ENCODE measurements at regions of chr6 and their contacts with region 1.

Region 1: GRCh38 chr6:32868257-32868788 is 14.3 kb downstream of the PSMB9 start:
- DNase-seq: no peak
- H3K4me3 ChIP-seq: no peak overlapping the region
- CTCF ChIP-seq: peak; percentile 70

Region 2: DNA sequence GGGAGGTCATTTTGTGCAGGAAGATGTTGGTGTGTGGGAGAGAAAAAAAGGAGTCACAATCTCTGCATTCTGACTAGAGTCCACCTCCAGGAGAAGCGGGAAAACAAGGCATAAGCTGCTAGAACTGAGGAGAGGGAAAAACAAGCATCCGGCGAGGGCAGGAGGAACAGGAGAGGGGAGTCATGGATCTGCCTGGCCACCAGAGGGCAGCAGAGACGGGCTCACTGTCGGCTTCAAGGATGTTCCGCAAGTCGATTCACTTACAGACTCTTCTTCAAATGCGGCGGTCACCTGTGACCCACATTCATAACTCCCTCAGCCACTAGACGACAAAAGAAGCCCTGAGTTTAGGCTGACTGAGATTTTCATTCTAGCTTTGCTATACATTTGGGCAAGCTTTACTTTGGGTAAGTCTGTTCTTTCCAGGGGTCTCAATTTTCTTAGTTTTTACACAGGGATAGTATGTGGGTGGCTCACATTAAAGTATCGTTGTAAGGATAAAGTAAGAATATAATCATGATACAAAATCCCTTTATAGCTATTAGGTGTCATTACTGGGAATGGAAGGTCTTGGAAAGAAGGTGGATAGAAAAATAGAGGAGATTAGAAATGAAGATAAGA is 454.8 kb before region 1 on chr6:
- CTCF ChIA-PET with region 1: interaction called, 55 read pairs
- POLR2A ChIA-PET with region 1: no interaction called
- DNase-seq: peak; percentile 38
- H3K4me3 ChIP-seq: no peak overlapping the region
- CTCF ChIP-seq: peak; percentile 97

Region 3: DNA sequence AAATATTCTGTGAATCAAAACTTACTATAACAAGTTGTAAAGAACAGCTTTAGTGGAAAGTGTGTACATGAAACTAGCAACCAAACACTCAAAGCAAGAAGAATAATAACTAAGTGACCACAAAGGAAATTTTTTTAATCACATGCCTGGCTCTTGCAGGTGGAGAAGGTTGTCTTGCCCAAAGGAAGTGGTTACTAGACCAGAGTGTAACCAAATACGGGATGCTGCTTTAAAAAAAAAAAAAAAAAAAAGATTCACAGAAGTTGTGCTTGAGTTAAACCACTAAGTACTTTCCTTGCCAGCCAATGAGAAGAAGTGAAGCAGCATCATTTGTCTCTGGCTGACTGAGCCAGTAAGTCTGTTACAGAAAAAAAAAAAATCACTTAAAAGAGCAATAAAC is 182.7 kb before region 1 on chr6:
- CTCF ChIA-PET with region 1: no interaction called
- POLR2A ChIA-PET with region 1: no interaction called
- DNase-seq: no peak
- H3K4me3 ChIP-seq: no peak overlapping the region
- CTCF ChIP-seq: no peak

Region 4: DNA sequence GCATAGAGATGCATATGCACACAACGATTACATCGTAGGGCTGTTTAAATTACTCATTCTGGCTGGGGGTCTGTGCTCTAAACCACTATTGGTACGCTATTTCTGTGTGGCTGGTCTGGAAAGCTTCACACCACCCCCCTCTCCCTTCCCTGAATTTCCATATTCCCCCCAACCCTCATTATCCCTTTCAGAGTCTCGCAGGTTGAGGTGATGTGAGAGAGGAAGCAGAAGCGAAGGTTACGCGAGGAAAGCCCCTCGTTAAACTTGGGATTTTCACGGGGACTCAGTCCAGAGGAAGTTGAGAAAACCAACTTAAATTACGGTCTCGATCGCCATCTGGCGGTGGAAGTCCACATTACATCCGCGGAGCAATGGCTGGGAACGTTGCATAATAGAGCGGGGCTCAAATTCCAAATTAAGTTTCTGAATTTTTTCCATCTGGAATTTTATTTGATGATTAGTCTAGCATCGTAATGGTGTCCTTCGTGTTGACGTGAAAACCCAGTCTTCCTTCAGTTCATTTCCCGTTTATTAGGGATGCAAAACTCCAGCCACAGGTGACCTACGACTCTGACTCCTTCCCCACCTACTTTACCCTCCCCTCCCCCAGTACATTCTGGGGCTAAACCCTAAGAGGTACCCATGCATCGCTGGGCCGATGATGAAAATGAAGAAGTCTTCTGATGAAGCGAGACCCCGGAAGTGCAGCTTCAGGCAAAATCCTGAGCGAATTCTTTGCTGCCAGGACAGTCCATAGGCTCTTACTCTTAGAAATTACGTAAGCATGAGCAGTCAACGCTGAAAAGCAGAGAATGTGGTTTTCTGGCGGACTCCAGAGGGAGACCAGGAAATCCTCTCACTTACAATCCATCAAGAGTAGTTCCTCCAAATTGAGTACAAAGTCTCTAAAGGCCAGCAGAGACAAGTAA is 71.2 kb before region 1 on chr6:
- CTCF ChIA-PET with region 1: interaction called, 11 read pairs
- POLR2A ChIA-PET with region 1: no interaction called
- DNase-seq: no peak
- H3K4me3 ChIP-seq: peak overlapping the region; percentile 49
- CTCF ChIP-seq: peak; percentile 69

Region 5: DNA sequence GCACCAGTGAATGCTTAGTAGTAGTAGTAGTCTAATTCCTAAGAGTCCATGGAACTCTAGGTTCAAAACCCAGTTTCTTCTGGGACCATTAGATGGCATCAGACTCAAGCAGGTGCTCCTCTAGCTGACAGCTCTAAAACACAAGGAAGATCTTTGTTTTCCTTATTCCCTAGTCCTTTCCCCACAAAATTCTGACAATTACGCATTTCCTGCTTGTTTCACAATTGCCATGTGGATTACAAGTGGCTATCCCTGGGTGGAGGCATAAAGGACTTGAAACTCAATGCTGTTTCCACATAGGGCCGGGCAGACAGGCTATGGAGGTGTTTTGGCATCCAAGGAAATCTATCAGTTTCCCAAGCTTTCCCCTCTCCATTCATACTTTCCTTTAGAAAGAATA is 42.4 kb before region 1 on chr6:
- CTCF ChIA-PET with region 1: interaction called, 77 read pairs
- POLR2A ChIA-PET with region 1: no interaction called
- DNase-seq: no peak
- H3K4me3 ChIP-seq: no peak overlapping the region
- CTCF ChIP-seq: peak; percentile 24

Region 6: DNA sequence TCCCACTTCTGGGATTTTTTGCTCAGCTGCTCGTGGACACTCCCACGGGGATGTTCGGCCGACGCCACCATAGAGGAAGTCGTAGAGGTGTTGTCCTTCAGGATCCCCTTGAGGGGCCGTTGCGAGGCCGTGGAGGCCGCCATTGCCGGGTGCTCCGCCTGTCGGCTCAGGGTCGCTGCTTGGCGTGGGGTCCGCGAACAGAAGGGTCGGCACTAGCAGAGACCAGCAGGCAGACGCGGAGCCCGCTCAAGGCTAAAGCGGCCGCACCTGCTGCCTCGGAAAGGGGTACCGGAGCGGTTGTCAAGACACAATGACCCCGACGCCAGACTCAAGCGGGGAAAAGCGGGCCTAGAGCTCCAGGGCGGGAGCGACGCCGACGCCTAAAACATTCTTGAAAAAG is 11.4 kb after region 1 on chr6:
- CTCF ChIA-PET with region 1: interaction called, 30 read pairs
- POLR2A ChIA-PET with region 1: no interaction called
- DNase-seq: no peak
- H3K4me3 ChIP-seq: no peak overlapping the region
- CTCF ChIP-seq: no peak

Region 7: DNA sequence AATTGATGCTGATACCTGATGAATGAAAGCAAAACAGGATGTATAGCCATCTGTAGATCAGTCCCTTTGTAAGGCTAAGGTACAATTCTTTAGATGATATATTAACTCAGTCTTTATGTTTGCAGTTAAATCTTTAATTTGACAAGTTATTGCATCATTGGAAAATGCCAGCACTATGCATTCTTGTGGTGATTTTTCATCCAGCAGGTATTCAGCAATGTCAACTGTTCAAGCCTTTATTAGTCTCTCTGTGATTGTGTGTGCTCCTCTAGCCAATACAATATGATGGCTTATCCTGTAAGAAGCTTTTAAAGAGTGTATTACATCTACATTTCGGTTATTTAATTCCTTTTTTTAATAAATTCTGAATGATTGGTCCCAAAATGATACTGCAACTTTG is 38.2 kb after region 1 on chr6:
- CTCF ChIA-PET with region 1: interaction called, 13 read pairs
- POLR2A ChIA-PET with region 1: no interaction called
- DNase-seq: no peak
- H3K4me3 ChIP-seq: no peak overlapping the region
- CTCF ChIP-seq: no peak

Region 8: DNA sequence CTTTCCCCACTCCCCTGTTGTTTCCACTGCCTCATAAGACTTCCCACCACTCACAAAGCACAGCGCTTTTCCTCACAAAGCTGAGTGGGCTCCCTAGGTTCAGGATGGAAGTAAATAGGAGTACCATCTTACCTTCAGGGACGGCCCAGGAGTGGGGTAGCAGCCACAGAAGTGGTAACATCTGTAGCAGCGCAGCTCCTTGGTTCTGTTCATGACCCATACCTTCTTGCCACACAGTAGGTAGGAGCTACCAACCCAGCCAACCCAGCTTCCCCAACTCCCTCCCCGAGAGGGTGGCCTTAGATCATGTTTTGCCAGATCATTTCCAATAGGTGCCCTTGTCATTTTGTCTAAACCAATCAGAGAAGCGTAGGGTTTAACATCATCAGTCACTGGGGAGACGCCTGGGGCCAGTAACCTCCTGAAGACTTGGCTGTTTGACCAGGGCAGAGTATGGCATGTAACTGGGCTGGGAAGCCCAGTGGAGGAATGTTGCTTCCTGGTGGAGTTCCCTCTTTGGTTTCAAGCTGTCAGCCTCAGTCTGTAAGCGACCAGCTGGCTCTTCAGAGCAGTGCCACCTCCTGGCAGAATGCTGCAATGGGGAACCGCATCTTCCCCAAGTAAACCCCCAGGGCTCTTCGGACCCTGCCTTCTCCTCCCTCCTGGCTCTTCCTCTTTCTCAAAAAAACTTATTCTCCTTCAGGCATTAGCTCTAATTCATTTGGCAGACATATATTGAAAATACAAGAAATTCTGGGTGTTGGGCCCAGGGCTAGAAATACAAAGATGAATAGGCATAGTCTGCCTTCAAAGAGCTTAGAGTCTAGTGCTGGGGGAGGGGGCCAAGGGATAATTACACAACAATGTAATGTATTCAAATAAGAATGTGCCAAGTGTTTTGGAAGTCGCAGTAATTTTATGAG is 84.8 kb after region 1 on chr6 and contains the start of gene HLA-DMA:
- CTCF ChIA-PET with region 1: interaction called, 16 read pairs
- POLR2A ChIA-PET with region 1: no interaction called
- DNase-seq: peak; percentile 93
- H3K4me3 ChIP-seq: no peak within 1 kb of the TSS
- CTCF ChIP-seq: peak; percentile 84

Region 9: GRCh38 chr6:33683051-33683571 is 814.8 kb after region 1 on chr6:
- CTCF ChIA-PET with region 1: no interaction called
- POLR2A ChIA-PET with region 1: no interaction called
- DNase-seq: no peak
- H3K4me3 ChIP-seq: no peak overlapping the region
- CTCF ChIP-seq: no peak

Measured in AG04449 (cell line).